ENCODE measurements at regions of chr7 and their contacts with region 1.

Region 1: DNA sequence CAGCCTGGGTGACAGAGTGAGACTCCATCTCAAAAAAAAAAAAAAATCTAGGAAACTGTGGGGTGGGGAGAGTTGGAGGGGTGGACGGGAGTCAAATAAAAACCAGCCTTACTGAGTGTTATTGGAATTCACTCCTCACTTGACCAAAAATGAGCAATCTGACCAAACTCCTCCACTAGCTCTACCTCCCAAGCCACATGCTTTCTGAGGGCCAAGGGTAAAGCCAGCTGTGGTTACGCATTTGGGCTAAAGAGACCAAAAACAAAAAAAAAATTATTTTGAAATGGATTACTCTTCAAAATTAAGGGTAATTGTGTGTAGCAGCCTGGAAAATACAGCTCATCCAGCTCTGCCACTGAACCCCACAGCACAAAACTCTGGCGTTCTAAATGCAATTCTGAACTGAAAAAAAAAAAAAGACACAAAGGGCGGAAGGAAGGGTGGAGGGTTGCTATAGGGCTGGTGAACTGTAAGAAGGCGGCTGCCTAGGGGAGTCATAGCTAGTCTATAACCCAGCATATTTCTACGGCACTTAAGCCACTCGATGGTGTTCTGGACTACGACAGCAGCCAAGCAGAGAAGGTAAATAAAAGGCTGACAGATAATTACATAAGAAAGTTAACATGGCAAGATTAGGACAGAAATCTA is 7.8 kb downstream of the ELMO1 start:
- DNase-seq: peak; percentile 60
- H3K4me3 Mint-ChIP-seq: peak overlapping the region; percentile 45
- H3K27ac Mint-ChIP-seq: peak overlapping the region; percentile 91
- H3K4me1 Mint-ChIP-seq: peaks cover 89% of the 10 kb centered on the region
- H3K27me3 Mint-ChIP-seq: no peaks in the 10 kb centered on the region

Region 2: GRCh38 chr7:37359662-37360444 is 81.0 kb before region 1 on chr7:
- CTCF ChIA-PET with region 1: interaction called, 15 read pairs
- POLR2A ChIA-PET with region 1: interaction called, 55 read pairs
- intact Hi-C with region 1: loop called (anchors 1 kb)
- DNase-seq: peak; percentile 72
- H3K4me3 Mint-ChIP-seq: peak overlapping the region; percentile 54
- H3K27ac Mint-ChIP-seq: peak overlapping the region; percentile 93
- H3K4me1 Mint-ChIP-seq: peaks cover 92% of the 10 kb centered on the region
- H3K27me3 Mint-ChIP-seq: no peaks in the 10 kb centered on the region

Region 3: DNA sequence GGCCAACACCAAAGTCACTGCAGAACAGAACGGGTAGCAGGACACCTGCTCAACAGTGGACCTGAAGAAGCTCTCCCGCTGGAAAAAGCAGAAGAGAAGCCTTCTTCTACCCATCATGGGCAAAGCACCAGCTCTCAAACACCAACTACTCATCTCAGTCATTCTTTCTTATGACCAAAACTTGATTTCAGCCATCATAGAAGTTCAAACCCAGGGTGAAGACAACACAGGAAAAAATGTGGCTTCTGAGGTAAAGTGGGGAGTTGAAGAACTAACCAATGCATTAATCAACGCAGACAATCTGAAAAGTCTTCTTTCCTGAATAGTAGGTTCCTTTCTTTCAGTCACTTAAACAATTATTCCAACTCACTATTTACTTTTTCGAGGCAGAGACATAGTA is 75.5 kb before region 1 on chr7:
- CTCF ChIA-PET with region 1: interaction called, 3 read pairs
- POLR2A ChIA-PET with region 1: interaction called, 10 read pairs
- intact Hi-C with region 1: loop called (anchors 1 kb)
- DNase-seq: no peak
- H3K4me3 Mint-ChIP-seq: no peak overlapping the region
- H3K27ac Mint-ChIP-seq: peak overlapping the region; percentile 98
- H3K4me1 Mint-ChIP-seq: peaks cover 86% of the 10 kb centered on the region
- H3K27me3 Mint-ChIP-seq: no peaks in the 10 kb centered on the region

Region 4: DNA sequence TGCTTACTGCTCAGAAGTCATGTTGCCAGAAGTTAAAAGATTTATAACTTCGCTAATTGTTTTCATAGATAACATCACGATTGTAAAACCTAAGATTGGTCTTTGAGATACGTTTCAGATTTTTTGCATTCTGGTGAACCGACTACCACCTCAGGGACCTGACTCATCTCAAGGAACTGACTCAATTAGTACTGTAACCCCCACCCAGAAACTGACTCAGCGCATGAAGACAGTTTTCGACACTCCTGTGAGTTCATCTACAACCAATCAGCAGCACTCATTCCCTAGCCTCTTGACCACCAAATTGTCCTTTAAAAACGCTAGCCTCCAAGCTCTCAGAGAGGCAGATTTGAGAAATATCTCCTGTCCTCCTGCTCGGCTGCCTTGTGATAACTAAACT is 64.5 kb before region 1 on chr7:
- CTCF ChIA-PET with region 1: interaction called, 3 read pairs
- POLR2A ChIA-PET with region 1: interaction called, 3 read pairs
- intact Hi-C with region 1: loop called (anchors 1 kb)
- DNase-seq: peak; percentile 80
- H3K4me3 Mint-ChIP-seq: peak overlapping the region; percentile 54
- H3K27ac Mint-ChIP-seq: peak overlapping the region; percentile 95
- H3K4me1 Mint-ChIP-seq: peaks cover 72% of the 10 kb centered on the region
- H3K27me3 Mint-ChIP-seq: no peaks in the 10 kb centered on the region

Region 5: DNA sequence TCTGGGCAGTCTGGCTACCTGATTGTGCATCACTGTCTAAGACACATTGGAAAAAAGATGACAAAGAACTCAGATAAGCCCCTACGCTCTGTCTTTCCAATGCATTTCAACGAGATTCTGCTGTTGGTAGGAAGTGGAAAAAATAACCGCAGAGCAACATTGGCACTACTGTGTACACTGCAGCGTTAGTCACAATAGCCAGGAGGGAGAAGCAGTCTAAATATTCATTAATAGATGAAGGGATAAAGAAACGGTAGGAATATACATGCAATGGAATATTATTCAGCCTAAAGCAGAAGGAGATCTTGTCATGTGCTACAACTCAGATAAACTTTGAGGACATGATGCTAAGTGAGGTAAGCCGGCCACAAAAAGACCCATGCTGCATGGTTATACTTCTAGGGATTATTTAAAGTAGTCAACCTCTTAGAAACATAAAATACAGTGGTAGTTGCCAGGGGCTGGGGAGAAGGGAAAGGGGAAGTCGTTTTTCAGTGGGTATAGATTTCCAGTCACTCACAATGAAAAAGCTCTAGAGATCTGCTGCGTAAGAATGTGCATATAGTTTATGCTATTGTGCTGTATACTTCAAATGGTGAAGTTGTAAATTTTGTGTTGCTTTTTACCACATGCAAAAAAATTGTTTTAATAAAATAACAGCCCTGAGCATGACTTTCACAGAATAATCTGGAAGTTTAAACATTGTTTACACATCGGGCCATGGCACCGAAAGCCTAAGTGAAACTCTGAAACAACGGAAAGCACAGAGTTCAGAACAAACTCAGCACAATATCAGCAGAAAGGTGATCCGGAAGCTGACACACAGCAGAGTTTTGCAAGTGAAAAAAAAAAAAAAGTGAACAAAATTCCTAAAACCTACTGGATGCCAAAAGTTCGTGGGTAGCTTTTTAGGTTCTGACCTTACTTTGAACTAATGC is 32.3 kb before region 1 on chr7:
- CTCF ChIA-PET with region 1: interaction called, 4 read pairs
- POLR2A ChIA-PET with region 1: interaction called, 9 read pairs
- intact Hi-C with region 1: loop called (anchors 1 kb)
- DNase-seq: peak; percentile 34
- H3K4me3 Mint-ChIP-seq: peak overlapping the region; percentile 70
- H3K27ac Mint-ChIP-seq: peak overlapping the region; percentile 96
- H3K4me1 Mint-ChIP-seq: peaks cover 86% of the 10 kb centered on the region
- H3K27me3 Mint-ChIP-seq: no peaks in the 10 kb centered on the region

Region 6: DNA sequence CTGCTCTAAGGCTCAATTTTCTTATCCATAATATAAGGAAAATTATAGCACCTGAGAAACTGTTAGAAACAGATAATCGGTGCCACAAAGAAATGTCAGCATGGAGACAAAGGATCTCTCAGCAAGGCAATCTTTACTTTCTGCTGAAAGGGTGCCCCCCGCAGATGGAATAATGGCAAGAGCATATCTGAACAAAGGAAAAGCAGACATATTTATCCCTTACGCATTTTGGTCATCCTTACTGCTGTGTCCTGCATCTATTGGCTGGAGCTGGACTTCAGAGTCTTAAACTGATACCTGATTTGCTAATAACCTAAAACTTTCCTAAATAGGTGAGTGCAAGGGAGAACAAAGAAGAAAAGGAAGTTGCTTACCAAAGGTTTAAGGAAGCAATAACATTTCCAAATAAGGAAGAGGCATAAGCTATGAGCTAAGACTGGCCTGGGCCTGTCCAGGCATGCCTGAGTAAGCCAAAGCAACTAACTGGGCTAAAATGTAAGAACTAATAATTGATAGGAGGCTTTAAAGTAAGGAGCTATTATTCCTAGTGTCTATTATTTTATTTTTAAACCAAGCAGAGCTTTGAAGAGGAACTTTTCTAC is 47.4 kb after region 1 on chr7:
- CTCF ChIA-PET with region 1: no interaction called
- POLR2A ChIA-PET with region 1: no interaction called
- intact Hi-C with region 1: no loop called
- DNase-seq: no peak
- H3K4me3 Mint-ChIP-seq: no peak overlapping the region
- H3K27ac Mint-ChIP-seq: no peak overlapping the region
- H3K4me1 Mint-ChIP-seq: no peaks in the 10 kb centered on the region
- H3K27me3 Mint-ChIP-seq: peaks cover 4% of the 10 kb centered on the region

Region 7: DNA sequence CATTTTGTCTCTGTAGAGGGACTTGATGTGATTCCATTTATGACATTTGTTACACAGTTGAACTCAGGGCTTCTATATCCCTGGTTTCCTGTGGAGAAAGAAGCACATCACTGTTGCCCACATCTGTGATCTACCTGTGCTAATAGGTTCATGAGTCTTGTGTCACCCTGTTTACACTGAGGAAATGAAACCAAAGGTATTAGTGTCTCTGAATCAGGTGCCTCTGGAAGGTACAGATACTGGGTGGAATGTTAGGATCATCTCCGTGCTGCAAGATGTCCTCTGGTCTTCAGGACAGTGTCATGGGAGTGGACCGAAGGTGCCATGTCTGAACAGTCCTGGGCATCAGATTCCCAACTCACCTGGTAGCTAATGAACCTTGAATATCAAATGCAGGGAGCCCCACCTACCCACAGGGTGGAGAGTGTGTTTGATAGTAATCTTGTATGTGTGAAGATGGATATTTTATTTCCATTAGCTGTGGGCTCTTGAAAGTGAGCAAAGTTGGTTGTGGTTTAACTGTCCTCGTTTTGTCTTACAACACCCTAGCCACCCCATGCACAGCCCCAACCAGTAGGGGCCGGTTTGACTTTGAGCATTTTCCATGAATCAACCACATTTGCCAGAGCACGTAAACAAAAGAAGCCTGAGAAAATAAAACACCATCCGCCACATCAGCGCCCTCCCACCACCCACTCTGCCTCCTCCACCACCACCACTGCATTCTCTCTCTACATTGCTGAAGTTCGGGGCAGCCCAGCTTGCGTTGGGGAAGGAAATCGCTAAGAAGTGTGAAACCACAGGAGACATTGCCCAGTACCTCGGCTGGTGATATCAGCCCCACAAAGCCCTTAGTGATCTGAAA is 791.9 kb after region 1 on chr7:
- CTCF ChIA-PET with region 1: no interaction called
- POLR2A ChIA-PET with region 1: no interaction called
- intact Hi-C with region 1: loop called (anchors 5 kb)
- DNase-seq: peak; percentile 88
- H3K4me3 Mint-ChIP-seq: peak overlapping the region; percentile 44
- H3K27ac Mint-ChIP-seq: peak overlapping the region; percentile 77
- H3K4me1 Mint-ChIP-seq: peaks cover 44% of the 10 kb centered on the region
- H3K27me3 Mint-ChIP-seq: no peaks in the 10 kb centered on the region